Activated T-helper 2 cell treated with anti-CD3 and anti-CD28 coated beads, Interferon-gamma antibody, Interleukin-2, Interleukin-4, amounts not matched to agents 10 μg/mL and 5 μg/mL and 100 μg/mL, durations not matched to agents 14 hours and 24 hours and 36 hours (primary cell): ENCODE measurements at regions of chr9 and their contacts with region 1.

Region 1: GRCh38 chr9:124754289-124754688 is 16.8 kb downstream of the NR6A1 start:
- DNase-seq: no peak
- H3K4me3 Mint-ChIP-seq: no peak overlapping the region
- H3K27ac Mint-ChIP-seq: no peak overlapping the region
- H3K4me1 Mint-ChIP-seq: peaks cover 15% of the 10 kb centered on the region
- H3K27me3 Mint-ChIP-seq: peaks cover 59% of the 10 kb centered on the region

Region 2: DNA sequence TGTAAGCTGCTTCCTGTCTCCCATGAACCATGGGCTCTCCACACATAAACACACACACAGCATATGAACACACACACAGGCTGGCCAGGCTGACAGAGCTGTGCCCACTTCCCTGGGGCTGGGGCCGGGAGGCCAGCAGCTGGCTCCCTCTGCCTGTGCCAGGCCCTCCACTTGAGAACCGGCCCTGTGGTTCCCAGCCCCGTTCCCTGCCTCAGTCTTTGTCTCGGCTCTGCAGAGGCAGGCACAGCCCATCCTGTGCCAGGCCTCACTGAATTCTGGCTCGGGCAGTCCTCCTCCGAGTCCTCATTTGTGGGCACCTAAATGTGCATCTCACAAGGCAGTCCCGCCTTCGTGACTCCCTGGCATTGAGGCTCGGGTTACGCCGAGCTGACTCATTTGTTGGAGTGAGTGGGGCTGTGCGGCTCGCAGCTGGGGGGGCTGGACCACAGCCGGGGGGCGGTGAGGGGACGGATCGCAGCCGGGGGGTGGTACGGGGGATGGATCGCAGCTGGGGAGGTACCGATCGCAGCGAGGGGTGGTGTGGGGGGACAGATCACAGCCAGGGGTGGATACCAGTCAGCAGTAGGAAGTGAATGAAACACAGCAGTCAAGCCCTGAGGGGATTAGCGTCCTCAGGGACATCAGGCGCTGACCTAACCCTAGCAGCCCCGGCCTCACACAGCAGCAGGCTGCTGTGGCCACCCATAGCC is 411.4 kb before region 1 on chr9:
- intact Hi-C with region 1: no loop called
- DNase-seq: no peak
- H3K4me3 Mint-ChIP-seq: no peak overlapping the region
- H3K27ac Mint-ChIP-seq: no peak overlapping the region
- H3K4me1 Mint-ChIP-seq: no peaks in the 10 kb centered on the region
- H3K27me3 Mint-ChIP-seq: no peaks in the 10 kb centered on the region

Region 3: DNA sequence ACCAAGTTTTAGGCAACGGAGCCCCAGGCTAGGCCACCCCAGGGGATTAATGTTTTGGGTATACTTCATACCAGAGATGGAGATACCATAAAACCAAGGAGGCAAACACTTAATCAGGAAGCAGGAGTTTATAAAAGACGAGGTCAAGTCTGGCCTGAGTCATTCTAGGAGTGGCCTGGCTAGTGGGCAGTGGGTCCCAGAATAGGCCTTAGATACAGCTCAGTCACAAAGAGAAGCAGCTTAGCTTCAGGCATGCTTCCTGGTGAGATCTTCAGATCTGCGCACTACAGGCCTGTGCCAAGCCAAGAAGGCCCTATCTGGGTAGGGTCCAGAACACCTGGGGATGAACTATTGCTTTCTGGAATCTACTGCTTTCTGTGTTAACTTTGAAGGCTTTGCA is 226.5 kb before region 1 on chr9:
- intact Hi-C with region 1: no loop called
- DNase-seq: no peak
- H3K4me3 Mint-ChIP-seq: no peak overlapping the region
- H3K27ac Mint-ChIP-seq: no peak overlapping the region
- H3K4me1 Mint-ChIP-seq: no peaks in the 10 kb centered on the region
- H3K27me3 Mint-ChIP-seq: peaks cover 5% of the 10 kb centered on the region

Region 4: GRCh38 chr9:124617471-124618141 is 136.7 kb before region 1 on chr9:
- intact Hi-C with region 1: loop called (anchors 5 kb)
- DNase-seq: peak; percentile 57
- H3K4me3 Mint-ChIP-seq: no peak overlapping the region
- H3K27ac Mint-ChIP-seq: no peak overlapping the region
- H3K4me1 Mint-ChIP-seq: peaks cover 9% of the 10 kb centered on the region
- H3K27me3 Mint-ChIP-seq: peaks cover 7% of the 10 kb centered on the region

Region 5: DNA sequence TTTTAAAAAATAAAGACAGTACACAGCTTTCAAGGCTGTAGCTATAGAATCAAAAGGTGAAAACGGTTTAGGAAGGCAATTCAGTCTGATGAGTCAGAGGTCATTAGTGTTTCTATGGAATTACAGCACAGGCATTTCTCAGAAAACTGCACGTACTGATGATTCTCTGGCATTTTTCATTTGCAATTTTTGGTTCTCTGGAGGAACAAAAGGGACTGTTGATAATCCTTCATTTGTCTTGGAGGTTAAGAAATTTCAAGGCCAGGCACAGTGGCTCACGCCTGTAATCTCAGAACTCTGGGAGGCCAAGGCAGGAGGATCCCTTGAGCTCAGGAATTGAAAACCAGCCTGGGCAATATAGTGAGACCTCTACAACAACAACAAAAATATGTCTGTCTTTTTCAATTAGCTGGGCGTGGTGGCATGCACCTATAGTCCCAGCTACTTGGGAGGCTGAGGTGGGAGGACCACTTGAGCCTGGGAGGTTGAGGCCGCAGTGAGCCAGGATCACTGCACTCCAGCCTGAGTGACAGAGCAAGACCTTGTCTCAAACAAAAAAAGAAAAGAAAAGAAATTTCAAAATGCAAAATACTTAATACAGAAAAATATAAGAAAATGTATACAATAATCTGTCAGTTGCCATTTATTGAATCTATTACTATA is 10.5 kb before region 1 on chr9:
- intact Hi-C with region 1: loop called (anchors 2 kb)
- DNase-seq: no peak
- H3K4me3 Mint-ChIP-seq: no peak overlapping the region
- H3K27ac Mint-ChIP-seq: peak overlapping the region; percentile 69
- H3K4me1 Mint-ChIP-seq: peaks cover 36% of the 10 kb centered on the region
- H3K27me3 Mint-ChIP-seq: peaks cover 3% of the 10 kb centered on the region